ENCODE measurements at regions of chr5 and their contacts with region 1.

Region 1: GRCh38 chr5:17316970-17317459 is 99.6 kb downstream of the BASP1 start:
- DNase-seq: no peak
- ATAC-seq: peak; percentile 68
- H3K4me3 Mint-ChIP-seq: peak overlapping the region; percentile 82
- H3K27ac Mint-ChIP-seq: peak overlapping the region; percentile 92
- H3K4me1 Mint-ChIP-seq: peaks cover 62% of the 10 kb centered on the region
- H3K27me3 Mint-ChIP-seq: no peaks in the 10 kb centered on the region
- CTCF ChIP-seq: no peak

Region 2: DNA sequence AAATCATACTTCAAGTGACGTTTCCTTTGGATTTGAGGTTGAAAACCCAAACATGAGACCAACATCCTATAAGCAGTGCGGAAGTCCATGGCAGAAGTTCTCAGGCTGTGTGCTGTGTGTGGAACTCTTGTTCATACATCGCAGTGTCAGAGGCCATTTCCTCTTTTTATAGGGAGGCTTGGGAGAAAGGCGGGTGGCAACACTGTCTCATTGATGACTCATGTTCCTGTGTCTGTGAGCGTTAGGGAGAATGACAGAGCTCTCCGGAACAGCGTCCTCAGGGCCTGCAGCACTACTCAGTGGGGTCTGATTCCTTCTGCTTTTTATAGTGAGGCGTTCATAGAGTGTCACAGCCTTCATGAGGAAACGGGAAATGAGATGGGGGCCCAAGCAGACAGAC is 198.4 kb before region 1 on chr5:
- CTCF ChIA-PET with region 1: no interaction called
- POLR2A ChIA-PET with region 1: no interaction called
- intact Hi-C with region 1: no loop called
- DNase-seq: no peak
- ATAC-seq: peak; percentile 95
- H3K4me3 Mint-ChIP-seq: no peak overlapping the region
- H3K27ac Mint-ChIP-seq: peak overlapping the region; percentile 5
- H3K4me1 Mint-ChIP-seq: peaks cover 7% of the 10 kb centered on the region
- H3K27me3 Mint-ChIP-seq: no peaks in the 10 kb centered on the region
- CTCF ChIP-seq: no peak

Region 3: GRCh38 chr5:17255471-17256021 is 61.5 kb before region 1 on chr5:
- CTCF ChIA-PET with region 1: no interaction called
- POLR2A ChIA-PET with region 1: interaction called, 30 read pairs
- intact Hi-C with region 1: loop called (anchors 1 kb)
- DNase-seq: no peak
- ATAC-seq: peak; percentile 43
- H3K4me3 Mint-ChIP-seq: peak overlapping the region; percentile 44
- H3K27ac Mint-ChIP-seq: peak overlapping the region; percentile 95
- H3K4me1 Mint-ChIP-seq: peaks cover 93% of the 10 kb centered on the region
- H3K27me3 Mint-ChIP-seq: no peaks in the 10 kb centered on the region
- CTCF ChIP-seq: no peak

Region 4: GRCh38 chr5:17276445-17276844 is 40.6 kb before region 1 on chr5:
- CTCF ChIA-PET with region 1: no interaction called
- POLR2A ChIA-PET with region 1: interaction called, 116 read pairs
- intact Hi-C with region 1: loop called (anchors 1 kb)
- DNase-seq: no peak
- ATAC-seq: no peak
- H3K4me3 Mint-ChIP-seq: peak overlapping the region; percentile 55
- H3K27ac Mint-ChIP-seq: peak overlapping the region; percentile 94
- H3K4me1 Mint-ChIP-seq: peaks cover 87% of the 10 kb centered on the region
- H3K27me3 Mint-ChIP-seq: no peaks in the 10 kb centered on the region
- CTCF ChIP-seq: no peak

Region 5: GRCh38 chr5:17305964-17306716 is 10.9 kb before region 1 on chr5:
- CTCF ChIA-PET with region 1: no interaction called
- POLR2A ChIA-PET with region 1: interaction called, 17 read pairs
- intact Hi-C with region 1: no loop called
- DNase-seq: no peak
- ATAC-seq: no peak
- H3K4me3 Mint-ChIP-seq: no peak overlapping the region
- H3K27ac Mint-ChIP-seq: no peak overlapping the region
- H3K4me1 Mint-ChIP-seq: no peaks in the 10 kb centered on the region
- H3K27me3 Mint-ChIP-seq: no peaks in the 10 kb centered on the region
- CTCF ChIP-seq: no peak

Region 6: DNA sequence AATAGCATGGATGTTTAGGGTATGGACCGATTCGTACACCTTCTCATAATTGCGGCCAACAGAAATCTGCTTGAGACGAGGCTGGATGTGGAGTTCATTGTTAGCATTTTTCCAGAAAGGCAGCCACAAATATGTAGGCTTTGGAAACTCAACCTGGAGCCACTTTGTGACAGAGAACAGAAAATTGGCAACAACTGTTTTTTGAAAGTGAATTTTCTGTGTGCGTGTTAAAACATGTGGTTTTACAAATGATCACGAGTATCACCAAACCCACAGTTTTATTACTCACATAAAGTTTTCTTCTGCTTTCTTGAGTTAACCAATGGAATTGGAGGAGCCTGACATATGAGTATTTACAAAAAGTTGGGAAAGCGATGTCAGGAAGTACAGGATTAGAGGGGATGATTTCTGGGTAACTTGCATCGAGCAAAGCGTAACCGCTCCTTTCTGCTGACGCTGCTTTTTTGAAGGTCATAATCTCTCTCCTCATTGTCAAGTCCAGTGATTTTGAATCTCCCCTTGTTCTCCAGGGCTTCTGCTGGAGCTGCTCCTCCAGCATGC is 42.5 kb after region 1 on chr5:
- CTCF ChIA-PET with region 1: no interaction called
- POLR2A ChIA-PET with region 1: interaction called, 28 read pairs
- intact Hi-C with region 1: loop called (anchors 1 kb)
- DNase-seq: no peak
- ATAC-seq: no peak
- H3K4me3 Mint-ChIP-seq: no peak overlapping the region
- H3K27ac Mint-ChIP-seq: no peak overlapping the region
- H3K4me1 Mint-ChIP-seq: peaks cover 18% of the 10 kb centered on the region
- H3K27me3 Mint-ChIP-seq: no peaks in the 10 kb centered on the region
- CTCF ChIP-seq: no peak

Region 7: GRCh38 chr5:17436761-17437221 is 119.8 kb after region 1 on chr5:
- CTCF ChIA-PET with region 1: no interaction called
- POLR2A ChIA-PET with region 1: interaction called, 10 read pairs
- intact Hi-C with region 1: loop called (anchors 5 kb)
- DNase-seq: no peak
- ATAC-seq: peak; percentile 82
- H3K4me3 Mint-ChIP-seq: peak overlapping the region; percentile 79
- H3K27ac Mint-ChIP-seq: peak overlapping the region; percentile 82
- H3K4me1 Mint-ChIP-seq: peaks cover 27% of the 10 kb centered on the region
- H3K27me3 Mint-ChIP-seq: no peaks in the 10 kb centered on the region
- CTCF ChIP-seq: no peak

Measured in activated B cell treated with CpG ODN at 0.5 μM for 24 hours (primary cell).